ENCODE measurements at regions of chr6 and their contacts with region 1.

Region 1: DNA sequence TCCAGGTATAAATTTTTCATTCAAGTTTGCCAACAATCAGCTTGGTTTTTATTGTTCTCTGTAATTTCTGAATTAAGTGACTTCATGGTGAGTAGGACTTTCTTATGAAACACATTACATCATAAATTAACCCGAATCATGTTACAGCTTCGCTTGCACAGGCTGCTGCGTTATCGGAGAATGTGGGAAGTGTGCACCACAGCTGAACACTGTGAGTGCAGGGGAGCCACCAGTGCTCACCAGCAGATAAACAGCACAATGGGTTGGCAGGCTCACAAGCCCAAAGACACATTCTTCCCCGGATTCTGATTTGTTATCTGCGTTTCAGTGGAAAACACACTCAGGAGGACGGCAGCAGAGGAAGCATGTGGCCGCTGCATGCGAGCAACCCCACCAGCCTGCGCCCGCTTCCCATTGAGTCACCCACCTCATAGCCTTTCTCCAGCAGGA is 121.1 kb downstream of the GMDS start:
- DNase-seq: peak; percentile 99
- H3K4me3 ChIP-seq: peak overlapping the region in 1 of 3 experiments; percentile 3
- H3K27ac ChIP-seq: peak overlapping the region; percentile 60
- H3K4me1 ChIP-seq: peaks cover 30% of the 10 kb centered on the region
- H3K27me3 ChIP-seq: no peaks in the 10 kb centered on the region
- CTCF ChIP-seq: no peak
- POLR2A ChIP-seq: peak; percentile 30

Region 2: DNA sequence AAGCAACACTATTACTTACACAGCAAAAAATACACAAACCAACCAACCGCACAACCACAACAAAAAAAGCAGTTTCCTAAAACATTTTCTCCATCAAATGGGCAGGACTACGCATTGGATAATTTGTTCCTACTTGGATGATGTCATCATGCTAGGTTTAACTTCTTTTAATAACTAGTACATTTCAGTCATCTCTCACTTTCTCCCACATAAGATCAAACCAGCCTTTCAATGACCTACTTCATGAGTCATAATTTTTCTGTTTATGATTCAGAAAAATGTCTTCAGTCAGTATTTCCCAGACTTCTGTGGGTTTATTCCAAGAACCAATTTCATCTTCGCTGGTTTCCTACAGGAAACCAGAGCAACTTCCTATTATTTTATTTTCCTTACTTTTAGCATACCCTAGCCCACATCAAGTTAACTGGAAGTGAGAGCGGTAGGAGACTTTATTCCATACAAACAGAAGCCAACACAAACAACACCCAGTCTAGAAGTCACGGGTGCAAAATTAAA is 13.1 kb before region 1 on chr6:
- CTCF ChIA-PET with region 1: interaction called, 6 read pairs
- POLR2A ChIA-PET with region 1: no interaction called
- dilution Hi-C with region 1: no loop called
- intact Hi-C with region 1: loop called (anchors 1 kb)
- DNase-seq: peak; percentile 97
- H3K4me3 ChIP-seq: peak overlapping the region in 1 of 3 experiments; percentile 51
- H3K27ac ChIP-seq: peak overlapping the region; percentile 76
- H3K4me1 ChIP-seq: peaks cover 40% of the 10 kb centered on the region
- H3K27me3 ChIP-seq: no peaks in the 10 kb centered on the region
- CTCF ChIP-seq: no peak
- POLR2A ChIP-seq: no peak

Region 3: DNA sequence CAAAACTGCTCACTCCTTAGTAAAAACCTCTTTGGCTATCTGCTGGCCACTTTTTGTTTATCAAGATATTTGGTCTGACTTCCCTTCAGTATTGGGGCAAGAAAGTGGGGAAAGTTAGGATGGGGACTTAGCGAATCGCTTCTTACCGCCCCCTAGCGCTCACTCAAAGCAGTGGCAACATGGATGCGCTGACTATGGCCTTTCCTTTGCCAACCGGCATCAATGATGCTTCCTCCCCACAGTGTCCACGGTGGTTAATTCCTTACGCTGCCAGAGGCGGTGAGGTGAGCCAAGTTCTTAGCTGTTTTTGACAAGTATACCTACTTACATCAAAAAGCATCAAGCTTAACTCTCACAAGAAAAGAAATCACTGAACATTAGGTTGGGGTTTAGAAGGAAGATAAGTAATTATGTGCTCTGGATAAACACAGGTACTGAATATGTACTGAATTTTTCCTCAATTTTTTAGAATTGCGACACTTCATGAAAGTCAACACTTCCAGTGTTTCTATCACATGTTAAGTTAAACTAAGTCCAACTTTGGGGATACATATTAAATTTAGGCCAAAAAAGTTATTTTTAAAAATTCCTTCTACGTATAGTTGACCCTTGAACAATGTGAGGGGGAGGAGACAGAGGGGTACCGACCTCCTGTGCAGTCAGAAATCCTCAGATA is 34.4 kb after region 1 on chr6:
- CTCF ChIA-PET with region 1: interaction called, 3 read pairs
- POLR2A ChIA-PET with region 1: no interaction called
- dilution Hi-C with region 1: no loop called
- intact Hi-C with region 1: loop called (anchors 2 kb)
- DNase-seq: no peak
- H3K4me3 ChIP-seq: no peak overlapping the region
- H3K27ac ChIP-seq: no peak overlapping the region
- H3K4me1 ChIP-seq: peaks cover 17% of the 10 kb centered on the region
- H3K27me3 ChIP-seq: no peaks in the 10 kb centered on the region
- CTCF ChIP-seq: peak; percentile 13 to 25
- POLR2A ChIP-seq: no peak